ENCODE measurements at regions of chr16 and their contacts with region 1.

Region 1: GRCh38 chr16:24010440-24011089 is 174.8 kb downstream of the PRKCB start:
- DNase-seq: peak; percentile 58 to 67
- ATAC-seq: peak in 6 of 8 donors; percentile 55 to 71 (median 62)
- H3K4me3 ChIP-seq: no peak overlapping the region
- H3K27ac ChIP-seq: no peak overlapping the region
- H3K4me1 ChIP-seq: peaks cover 0 to 34% (median 0%) of the 10 kb centered on the region in 9 donors
- H3K27me3 ChIP-seq: peaks cover 0 to 36% (median 5%) of the 10 kb centered on the region in 7 donors
- CTCF ChIP-seq: peak; percentile 19 to 84 (median 68)

Region 2: GRCh38 chr16:23742766-23743165 is 267.8 kb before region 1 on chr16:
- intact Hi-C with region 1: loop called in 2 of 10 experiments (anchors 5 kb)
- DNase-seq: no peak
- ATAC-seq: no peak
- H3K4me3 ChIP-seq: no peak overlapping the region
- H3K27ac ChIP-seq: no peak overlapping the region
- H3K4me1 ChIP-seq: no peaks in the 10 kb centered on the region
- H3K27me3 ChIP-seq: peaks cover 0 to 49% (median 25%) of the 10 kb centered on the region in 7 donors
- CTCF ChIP-seq: no peak

Region 3: DNA sequence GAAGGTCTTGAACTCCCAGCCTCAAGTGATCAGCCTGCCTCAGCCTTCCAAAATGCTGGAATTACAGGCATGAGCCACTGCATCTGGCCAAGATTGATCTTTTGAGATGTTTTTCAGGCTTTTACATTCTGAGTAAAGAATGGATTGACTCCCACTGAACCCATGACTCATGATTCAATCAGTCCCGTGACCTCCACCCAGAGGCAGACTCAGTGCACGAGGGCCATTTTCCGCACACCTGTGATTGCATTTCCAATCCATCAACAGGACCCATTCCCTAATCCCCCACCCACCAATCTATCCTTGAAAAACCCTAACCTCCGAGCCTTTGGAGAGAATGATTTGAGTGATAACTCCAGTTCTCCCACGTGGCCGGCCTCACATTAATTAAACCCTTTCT is 215.2 kb before region 1 on chr16:
- intact Hi-C with region 1: loop called in 7 of 10 experiments (anchors 2 to 10 kb)
- DNase-seq: no peak
- ATAC-seq: no peak
- H3K4me3 ChIP-seq: no peak overlapping the region
- H3K27ac ChIP-seq: no peak overlapping the region
- H3K4me1 ChIP-seq: no peaks in the 10 kb centered on the region
- H3K27me3 ChIP-seq: peaks cover 0 to 30% (median 5%) of the 10 kb centered on the region in 7 donors
- CTCF ChIP-seq: no peak

Measured in heart right ventricle (tissue), 16 donors.